ENCODE measurements at regions of chr5 and their contacts with region 1.

Region 1: DNA sequence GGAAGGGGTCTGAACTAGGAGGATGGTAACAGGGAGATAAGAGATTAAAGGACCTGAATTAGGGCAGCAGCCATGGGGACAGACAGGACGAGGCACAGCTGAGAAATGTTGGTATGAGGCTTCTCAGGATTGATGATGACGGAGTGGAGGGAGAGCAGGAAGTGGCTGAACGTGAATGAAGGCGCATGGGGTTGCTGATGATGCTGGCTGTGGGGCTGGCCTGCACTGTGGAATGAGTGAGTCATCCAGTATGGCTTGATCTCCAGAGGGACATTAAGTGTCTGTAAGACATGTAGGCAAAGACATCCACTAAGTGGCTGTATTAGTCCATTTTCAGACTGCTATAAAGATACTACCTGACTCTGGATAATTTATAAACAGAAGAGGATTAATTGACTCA is 256.4 kb downstream of the ICE1 start:
- DNase-seq: no peak
- H3K4me3 Mint-ChIP-seq: no peak overlapping the region
- H3K27ac Mint-ChIP-seq: no peak overlapping the region
- H3K4me1 Mint-ChIP-seq: no peaks in the 10 kb centered on the region
- H3K27me3 Mint-ChIP-seq: peaks cover 4% of the 10 kb centered on the region

Region 2: GRCh38 chr5:5658226-5658625 is 20.7 kb before region 1 on chr5:
- CTCF ChIA-PET with region 1: no interaction called
- intact Hi-C with region 1: loop called (anchors 1 kb)
- DNase-seq: no peak
- H3K4me3 Mint-ChIP-seq: no peak overlapping the region
- H3K27ac Mint-ChIP-seq: no peak overlapping the region
- H3K4me1 Mint-ChIP-seq: no peaks in the 10 kb centered on the region
- H3K27me3 Mint-ChIP-seq: peaks cover 28% of the 10 kb centered on the region